ENCODE measurements at regions of chr9 and their contacts with region 1.

Region 1: GRCh38 chr9:105842023-105842644 is 147.8 kb downstream of the TMEM38B start:
- DNase-seq: peak; percentile 34 to 47
- ATAC-seq: 0 out of 6 replicates have a peak, but pooled peaks of 1 of the 2 experiments have one; percentile 38
- H3K4me3 ChIP-seq: no peak overlapping the region
- H3K27ac ChIP-seq: no peak overlapping the region
- H3K4me1 ChIP-seq: no peaks in the 10 kb centered on the region
- CTCF ChIP-seq: peak; percentile 83
- EP300 ChIP-seq: no peak
- POLR2A ChIP-seq: no peak
- RAD21 ChIP-seq: peak; percentile 79 to 83

Region 2: DNA sequence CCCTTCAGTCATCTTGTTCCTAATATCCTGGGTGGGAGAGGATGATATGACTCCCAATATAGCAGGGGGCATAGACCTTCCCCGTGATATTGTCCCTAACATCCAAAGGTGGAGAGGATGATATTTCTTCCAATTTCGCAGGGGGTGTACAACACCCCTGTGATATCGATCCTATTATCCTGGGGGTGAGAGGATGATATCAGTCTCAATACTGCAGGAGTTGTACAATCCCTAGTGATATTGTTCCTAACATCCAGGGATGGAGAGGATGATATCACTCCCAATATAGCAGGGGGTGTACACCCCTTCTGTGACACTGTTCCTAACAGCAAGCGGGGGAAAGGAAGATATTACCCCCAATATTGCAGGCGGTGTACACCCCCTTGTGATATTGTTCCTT is 25.2 kb before region 1 on chr9:
- CTCF ChIA-PET with region 1: no interaction called
- POLR2A ChIA-PET with region 1: no interaction called
- DNase-seq: no peak
- ATAC-seq: no peak
- H3K4me3 ChIP-seq: no peak overlapping the region
- H3K27ac ChIP-seq: no peak overlapping the region
- H3K4me1 ChIP-seq: no peaks in the 10 kb centered on the region
- CTCF ChIP-seq: no peak
- EP300 ChIP-seq: no peak
- POLR2A ChIP-seq: no peak
- RAD21 ChIP-seq: no peak

Region 3: DNA sequence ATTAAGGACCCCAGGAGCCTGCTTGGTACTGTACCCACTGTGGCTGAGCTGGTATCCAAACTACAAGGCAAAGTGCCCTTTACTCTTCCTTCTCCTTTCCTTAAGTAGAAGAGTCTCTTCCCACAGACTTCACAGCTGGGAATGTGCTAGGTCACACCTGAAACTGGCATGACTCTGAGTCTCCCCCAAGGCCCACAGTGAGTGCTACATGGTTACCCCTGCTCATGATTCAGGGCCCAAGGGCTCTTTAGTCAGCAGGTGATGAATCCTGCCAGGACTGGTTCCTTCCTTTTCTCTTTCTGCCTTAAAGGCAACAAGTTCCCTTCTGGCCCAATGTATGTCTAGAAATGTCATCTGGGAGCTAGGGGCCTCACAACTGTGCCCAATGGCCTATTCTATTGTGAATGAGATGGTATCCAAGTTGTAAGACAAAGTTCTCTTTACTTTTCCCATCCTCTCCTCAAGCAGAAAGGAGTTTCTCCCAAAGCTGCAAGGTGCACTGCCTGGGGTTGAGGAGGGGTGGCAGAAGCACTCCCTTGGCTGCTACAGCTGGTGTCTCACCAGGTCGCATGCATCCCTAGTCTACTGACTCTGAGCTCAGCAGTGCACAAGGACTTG is 13.4 kb before region 1 on chr9:
- CTCF ChIA-PET with region 1: interaction called, 19 read pairs
- POLR2A ChIA-PET with region 1: no interaction called
- DNase-seq: no peak
- ATAC-seq: no peak
- H3K4me3 ChIP-seq: no peak overlapping the region
- H3K27ac ChIP-seq: no peak overlapping the region
- H3K4me1 ChIP-seq: no peaks in the 10 kb centered on the region
- CTCF ChIP-seq: no peak
- EP300 ChIP-seq: no peak
- POLR2A ChIP-seq: no peak
- RAD21 ChIP-seq: no peak

Region 4: GRCh38 chr9:106632621-106633020 is 790.5 kb after region 1 on chr9:
- CTCF ChIA-PET with region 1: no interaction called
- POLR2A ChIA-PET with region 1: no interaction called
- DNase-seq: no peak
- ATAC-seq: no peak
- H3K4me3 ChIP-seq: no peak overlapping the region
- H3K27ac ChIP-seq: no peak overlapping the region
- H3K4me1 ChIP-seq: no peaks in the 10 kb centered on the region
- CTCF ChIP-seq: no peak
- EP300 ChIP-seq: no peak
- POLR2A ChIP-seq: no peak
- RAD21 ChIP-seq: no peak